ENCODE measurements at regions of chr1 and their contacts with region 1.

Region 1: GRCh38 chr1:198157241-198157846 is 546 bp downstream of the NEK7 start:
- DNase-seq: no peak
- ATAC-seq: peak; percentile 59
- H3K4me3 ChIP-seq: peak overlapping the region; percentile 95
- H3K27ac ChIP-seq: peak overlapping the region; percentile 91
- H3K4me1 ChIP-seq: peaks cover 12% of the 10 kb centered on the region; the same call in 1 of the 2 replicates
- H3K27me3 ChIP-seq: no peaks in the 10 kb centered on the region
- CTCF ChIP-seq: no peak
- EP300 ChIP-seq: no peak
- POLR2A ChIP-seq: peak; percentile 69
- RAD21 ChIP-seq: no peak

Region 2: GRCh38 chr1:197481101-197481500 is 676.2 kb before region 1 on chr1:
- CTCF ChIA-PET with region 1: no interaction called
- POLR2A ChIA-PET with region 1: no interaction called
- RAD21 ChIA-PET with region 1: no interaction called
- SMC1A ChIA-PET with region 1: no interaction called
- in situ Hi-C with region 1: no loop called
- intact Hi-C with region 1: no loop called
- DNase-seq: no peak
- ATAC-seq: peak; percentile 70
- H3K4me3 ChIP-seq: no peak overlapping the region
- H3K27ac ChIP-seq: no peak overlapping the region
- H3K4me1 ChIP-seq: no peaks in the 10 kb centered on the region
- H3K27me3 ChIP-seq: no peaks in the 10 kb centered on the region; a peak in 1 of 4 replicates
- CTCF ChIP-seq: no peak
- EP300 ChIP-seq: no peak
- POLR2A ChIP-seq: no peak
- RAD21 ChIP-seq: no peak

Region 3: GRCh38 chr1:198088360-198089071 is 68.8 kb before region 1 on chr1:
- CTCF ChIA-PET with region 1: interaction called, 6 read pairs
- POLR2A ChIA-PET with region 1: no interaction called
- RAD21 ChIA-PET with region 1: interaction called, 3 read pairs
- SMC1A ChIA-PET with region 1: interaction called, 3 read pairs
- in situ Hi-C with region 1: no loop called
- intact Hi-C with region 1: loop called (anchors 1 kb)
- DNase-seq: no peak
- ATAC-seq: peak; percentile 58
- H3K4me3 ChIP-seq: no peak overlapping the region
- H3K27ac ChIP-seq: no peak overlapping the region
- H3K4me1 ChIP-seq: no peaks in the 10 kb centered on the region
- H3K27me3 ChIP-seq: no peaks in the 10 kb centered on the region; a peak in 1 of 4 replicates
- CTCF ChIP-seq: peak; percentile 43 to 64 (median 48); a peak in 5 of 6 replicates
- EP300 ChIP-seq: no peak
- POLR2A ChIP-seq: no peak
- RAD21 ChIP-seq: peak; percentile 72

Region 4: GRCh38 chr1:198167436-198167934 is 10.1 kb after region 1 on chr1:
- CTCF ChIA-PET with region 1: interaction called, 18 read pairs
- POLR2A ChIA-PET with region 1: interaction called, 17 read pairs
- RAD21 ChIA-PET with region 1: interaction called, 12 read pairs
- SMC1A ChIA-PET with region 1: interaction called, 18 read pairs
- in situ Hi-C with region 1: no loop called
- intact Hi-C with region 1: no loop called
- DNase-seq: peak; percentile 85
- ATAC-seq: peak; percentile 80
- H3K4me3 ChIP-seq: peak overlapping the region; percentile 57
- H3K27ac ChIP-seq: peak overlapping the region; percentile 59
- H3K4me1 ChIP-seq: peaks cover 47% of the 10 kb centered on the region
- H3K27me3 ChIP-seq: no peaks in the 10 kb centered on the region
- CTCF ChIP-seq: no peak
- EP300 ChIP-seq: peak; percentile 67 to 89; a peak in 3 of 4 replicates
- POLR2A ChIP-seq: no peak
- RAD21 ChIP-seq: no peak

Region 5: DNA sequence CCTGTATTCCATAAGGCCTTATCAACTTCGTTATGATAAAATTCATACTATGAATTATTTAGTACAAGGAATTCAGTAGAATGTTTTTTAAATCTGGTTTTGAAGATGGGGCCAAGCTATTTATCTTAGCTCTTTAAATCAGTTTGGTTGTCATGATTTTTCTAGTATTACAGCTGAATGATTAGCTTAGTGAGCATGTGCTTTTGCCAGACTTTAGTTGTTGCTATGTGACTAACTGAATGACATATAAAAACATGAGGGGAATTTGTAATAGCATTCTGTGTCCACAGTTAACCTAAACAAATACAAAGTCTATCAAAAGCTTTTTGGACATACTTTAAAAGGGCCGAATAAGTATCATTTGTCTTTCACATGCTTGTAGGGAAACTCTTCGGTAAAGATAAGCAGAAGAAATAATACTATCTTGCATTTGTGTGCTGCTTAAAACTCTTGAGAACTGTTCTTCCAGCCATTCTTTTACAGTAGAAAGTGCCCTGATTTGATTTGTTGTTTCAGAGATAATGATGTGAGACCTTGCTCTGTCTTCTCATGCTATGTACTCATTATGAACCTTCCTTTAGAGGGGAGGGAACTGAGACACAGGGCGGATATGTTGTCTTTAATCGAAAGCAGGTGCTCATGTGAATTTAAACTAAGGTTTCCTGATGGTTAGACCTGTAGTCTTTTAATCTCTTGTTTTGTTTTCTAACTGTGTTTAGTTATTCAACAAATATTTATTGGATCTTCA is 18.3 kb after region 1 on chr1:
- CTCF ChIA-PET with region 1: interaction called, 11 read pairs
- POLR2A ChIA-PET with region 1: interaction called, 7 read pairs
- RAD21 ChIA-PET with region 1: interaction called, 8 read pairs
- SMC1A ChIA-PET with region 1: interaction called, 9 read pairs
- in situ Hi-C with region 1: no loop called
- intact Hi-C with region 1: no loop called
- DNase-seq: no peak
- ATAC-seq: peak; percentile 85
- H3K4me3 ChIP-seq: no peak overlapping the region
- H3K27ac ChIP-seq: peak overlapping the region; percentile 45
- H3K4me1 ChIP-seq: peaks cover 26% of the 10 kb centered on the region
- H3K27me3 ChIP-seq: no peaks in the 10 kb centered on the region
- CTCF ChIP-seq: no peak
- EP300 ChIP-seq: no peak
- POLR2A ChIP-seq: no peak
- RAD21 ChIP-seq: no peak

Region 6: DNA sequence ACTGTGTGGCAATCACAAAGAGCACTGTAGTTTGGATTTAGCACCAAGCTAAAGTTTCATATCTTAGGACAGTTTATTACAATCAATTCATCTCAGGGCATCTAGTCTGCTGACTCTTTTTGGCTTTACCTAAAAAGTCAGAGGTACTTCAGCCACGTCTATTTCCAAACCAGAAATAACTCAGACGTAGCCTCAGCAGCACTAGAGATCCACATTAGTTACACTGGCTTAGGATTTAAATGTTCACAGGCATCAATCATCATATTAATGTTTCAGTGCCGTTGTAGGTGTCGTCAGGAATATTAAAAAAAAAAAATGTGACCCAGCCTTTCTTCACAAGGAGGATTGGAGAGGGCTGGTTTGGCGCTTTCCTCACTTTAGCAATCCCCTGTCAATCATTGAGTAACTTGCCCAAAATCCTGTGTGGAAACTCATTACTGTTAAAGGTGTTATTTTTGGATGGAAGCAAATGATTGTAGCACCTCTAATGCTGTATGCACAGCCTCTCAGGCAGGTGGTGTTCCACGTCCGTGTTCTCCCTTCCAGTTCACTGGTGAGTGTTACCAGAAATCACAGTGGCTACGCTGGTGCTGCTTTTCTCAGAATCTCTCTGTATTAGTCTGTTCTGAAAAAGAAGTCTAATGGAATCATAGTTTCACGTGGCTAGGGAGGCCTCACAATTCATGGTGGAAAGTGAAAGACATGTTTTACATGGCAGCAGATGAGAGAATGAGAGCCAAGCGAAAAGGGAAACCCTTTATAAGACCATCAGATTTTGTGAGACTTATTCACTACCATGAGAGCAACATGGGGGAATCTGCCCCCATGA is 44.8 kb after region 1 on chr1:
- CTCF ChIA-PET with region 1: no interaction called
- POLR2A ChIA-PET with region 1: interaction called, 3 read pairs
- RAD21 ChIA-PET with region 1: no interaction called
- SMC1A ChIA-PET with region 1: interaction called, 5 read pairs
- in situ Hi-C with region 1: no loop called
- intact Hi-C with region 1: loop called (anchors 2 kb)
- DNase-seq: peak; percentile 37
- ATAC-seq: peak; percentile 83
- H3K4me3 ChIP-seq: peak overlapping the region; percentile 4; the same call in 1 of the 2 replicates
- H3K27ac ChIP-seq: peak overlapping the region; percentile 56
- H3K4me1 ChIP-seq: peaks cover 12% of the 10 kb centered on the region
- H3K27me3 ChIP-seq: no peaks in the 10 kb centered on the region
- CTCF ChIP-seq: no peak
- EP300 ChIP-seq: no peak
- POLR2A ChIP-seq: no peak
- RAD21 ChIP-seq: peak; percentile 39; the same call in 1 of the 2 replicates

Region 7: DNA sequence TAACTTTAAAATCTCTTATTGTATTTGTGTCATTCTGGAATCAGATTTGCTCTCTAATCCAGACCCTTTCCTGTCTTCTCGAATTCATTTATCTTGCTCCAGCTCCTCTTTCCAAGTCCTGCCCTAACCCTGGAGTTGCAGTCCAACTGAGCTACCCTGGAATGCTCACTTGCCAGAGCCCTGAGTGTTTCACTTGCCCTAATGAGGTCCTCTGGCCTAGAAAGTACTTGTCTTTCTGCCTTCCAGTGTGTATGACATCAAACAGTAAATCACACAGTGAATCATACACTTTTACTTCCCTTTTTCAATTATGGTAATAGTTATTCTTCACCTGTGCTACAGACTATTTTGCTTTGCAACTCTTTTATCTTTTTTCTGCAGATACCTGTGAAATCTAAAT is 96.3 kb after region 1 on chr1:
- CTCF ChIA-PET with region 1: interaction called, 5 read pairs
- POLR2A ChIA-PET with region 1: interaction called, 3 read pairs
- RAD21 ChIA-PET with region 1: interaction called, 6 read pairs
- SMC1A ChIA-PET with region 1: interaction called, 7 read pairs
- in situ Hi-C with region 1: no loop called
- intact Hi-C with region 1: loop called (anchors 2 kb)
- DNase-seq: peak; percentile 50
- ATAC-seq: peak; percentile 99
- H3K4me3 ChIP-seq: no peak overlapping the region
- H3K27ac ChIP-seq: peak overlapping the region; percentile 75
- H3K4me1 ChIP-seq: peaks cover 16% of the 10 kb centered on the region
- H3K27me3 ChIP-seq: no peaks in the 10 kb centered on the region
- CTCF ChIP-seq: no peak
- EP300 ChIP-seq: peak; percentile 38 to 86; a peak in 2 of 4 replicates
- POLR2A ChIP-seq: no peak
- RAD21 ChIP-seq: peak; percentile 18; the same call in 1 of the 2 replicates

Region 8: DNA sequence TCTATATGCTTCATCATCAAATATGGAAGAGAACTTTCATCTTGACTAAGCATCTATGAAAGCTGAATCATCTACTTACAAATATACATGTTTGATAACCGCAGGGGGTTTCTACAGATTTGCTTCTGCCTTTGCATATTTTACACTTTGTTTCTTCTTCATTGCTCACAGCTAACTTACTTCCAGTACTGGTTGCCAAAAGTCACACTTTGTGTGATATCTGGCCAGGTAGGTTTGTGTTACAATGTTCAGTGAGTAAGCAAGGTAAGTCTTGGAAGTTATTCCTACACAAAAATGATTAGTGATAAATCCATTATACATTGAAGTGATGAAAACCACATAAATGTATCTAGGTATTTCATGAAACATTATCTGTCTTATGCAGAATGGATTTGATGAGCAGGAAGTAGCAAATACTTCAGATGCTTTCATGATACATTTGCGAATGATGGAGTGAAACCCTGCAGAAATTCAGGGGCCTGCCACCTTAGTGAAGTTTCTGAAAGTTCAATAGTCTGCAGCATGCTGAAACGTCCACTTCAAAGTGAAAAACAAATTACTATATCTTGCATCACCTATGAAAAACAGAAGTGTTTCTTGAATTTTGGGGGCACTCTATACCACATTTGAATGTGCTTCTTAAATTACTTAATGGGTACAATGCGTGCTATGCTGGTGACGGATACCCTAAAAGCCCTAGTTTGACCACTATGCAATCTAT is 195.8 kb after region 1 on chr1:
- CTCF ChIA-PET with region 1: interaction called, 7 read pairs
- POLR2A ChIA-PET with region 1: no interaction called
- RAD21 ChIA-PET with region 1: interaction called, 5 read pairs
- SMC1A ChIA-PET with region 1: interaction called, 7 read pairs
- in situ Hi-C with region 1: no loop called
- intact Hi-C with region 1: loop called (anchors 2 kb)
- DNase-seq: peak; percentile 33
- ATAC-seq: peak; percentile 93
- H3K4me3 ChIP-seq: no peak overlapping the region; the same call in 1 of the 2 replicates
- H3K27ac ChIP-seq: no peak overlapping the region
- H3K4me1 ChIP-seq: peaks cover 12% of the 10 kb centered on the region
- H3K27me3 ChIP-seq: no peaks in the 10 kb centered on the region
- CTCF ChIP-seq: no peak
- EP300 ChIP-seq: no peak
- POLR2A ChIP-seq: no peak
- RAD21 ChIP-seq: no peak

Region 9: DNA sequence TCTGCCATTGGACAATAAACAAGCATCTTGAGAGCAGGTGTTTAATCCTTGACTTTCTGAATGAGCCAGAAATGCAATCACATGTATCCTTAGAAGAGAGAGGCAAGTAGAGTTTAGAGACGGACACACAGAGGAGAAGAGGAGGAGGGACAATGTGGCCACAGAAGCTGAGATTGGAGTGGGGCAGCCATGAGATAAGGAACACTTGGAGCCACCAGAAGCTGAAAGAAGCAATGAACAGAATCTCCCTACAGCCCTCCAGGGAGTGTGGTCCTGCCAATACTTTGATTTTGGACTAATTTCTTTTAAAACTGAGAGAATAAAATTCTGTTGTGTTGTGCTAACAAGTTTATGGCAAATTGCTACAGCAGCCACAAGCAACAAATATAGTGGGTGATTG is 242.1 kb after region 1 on chr1:
- CTCF ChIA-PET with region 1: no interaction called
- POLR2A ChIA-PET with region 1: no interaction called
- RAD21 ChIA-PET with region 1: no interaction called
- SMC1A ChIA-PET with region 1: no interaction called
- in situ Hi-C with region 1: no loop called
- intact Hi-C with region 1: no loop called
- DNase-seq: no peak
- ATAC-seq: no peak
- H3K4me3 ChIP-seq: no peak overlapping the region
- H3K27ac ChIP-seq: no peak overlapping the region
- H3K4me1 ChIP-seq: no peaks in the 10 kb centered on the region
- H3K27me3 ChIP-seq: no peaks in the 10 kb centered on the region; a peak in 1 of 4 replicates
- CTCF ChIP-seq: no peak
- EP300 ChIP-seq: no peak
- POLR2A ChIP-seq: no peak
- RAD21 ChIP-seq: no peak